Posterior cingulate gyrus (tissue), 11 donors: ENCODE measurements at regions of chr2 and their contacts with region 1.

Region 1: GRCh38 chr2:86623651-86624541 is at the start of gene RNF103:
- DNase-seq: peak; percentile 94 to 100 (median 98)

Region 2: GRCh38 chr2:86562922-86563649 is 60.8 kb before region 1 on chr2 and contains the start of gene CHMP3:
- intact Hi-C with region 1: loop called (anchors 5 kb)
- DNase-seq: peak; percentile 89 to 99 (median 94)

Region 3: GRCh38 chr2:86645752-86646151 is 21.9 kb after region 1 on chr2:
- intact Hi-C with region 1: no loop called
- DNase-seq: no peak

Region 4: DNA sequence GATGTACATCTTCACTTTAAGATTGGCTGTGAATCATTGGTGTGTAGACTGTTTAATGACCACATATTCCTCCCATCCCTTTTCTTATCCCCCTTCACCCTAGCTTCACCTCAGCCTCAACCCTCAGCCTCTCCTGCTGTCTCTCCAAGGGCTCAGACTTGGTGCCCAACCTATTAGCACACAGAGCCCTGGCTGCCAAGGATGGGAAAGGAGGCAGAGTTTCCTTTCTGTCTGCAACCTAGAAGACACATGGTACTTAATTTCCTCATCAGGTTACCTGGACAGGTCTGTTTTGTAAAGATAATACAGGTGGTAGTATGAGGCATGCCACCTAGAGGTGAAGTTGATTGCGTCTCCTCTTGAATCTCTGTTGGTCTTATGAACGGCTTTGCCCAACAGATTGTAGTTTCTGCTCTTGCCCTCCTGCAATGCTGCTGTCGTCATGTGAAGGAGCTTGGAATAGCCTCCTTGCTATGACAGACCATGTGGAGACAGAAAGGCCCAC is 51.7 kb after region 1 on chr2:
- intact Hi-C with region 1: no loop called
- DNase-seq: no peak

Region 5: DNA sequence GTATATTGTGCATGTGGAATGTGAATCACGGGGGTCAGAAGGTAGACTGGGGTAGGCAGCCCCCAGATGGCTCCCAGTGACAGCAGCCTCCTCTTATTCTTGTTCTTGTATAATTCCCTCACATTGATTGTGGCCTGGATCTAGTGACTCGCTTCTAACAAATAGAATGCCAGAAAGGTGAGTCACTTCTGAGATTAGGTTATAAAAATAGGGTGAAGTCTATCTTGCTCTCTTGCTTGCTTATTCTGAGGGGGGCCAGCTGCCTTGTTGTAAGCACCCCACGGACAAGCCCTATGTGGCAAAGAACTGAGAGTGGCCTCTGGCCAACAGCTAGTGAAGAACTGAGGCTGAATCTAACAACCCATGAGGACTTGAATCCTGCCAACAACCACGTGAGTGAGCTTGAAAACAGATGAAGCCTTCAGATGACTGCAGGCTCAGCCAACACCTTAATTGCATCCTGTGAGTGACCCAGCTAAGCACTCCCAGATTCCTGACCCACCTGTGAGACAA is 80.6 kb after region 1 on chr2:
- intact Hi-C with region 1: loop called (anchors 5 kb)
- DNase-seq: peak in 1 of 10 donors; percentile 46